ENCODE measurements at regions of chr20 and their contacts with region 1.

Region 1: DNA sequence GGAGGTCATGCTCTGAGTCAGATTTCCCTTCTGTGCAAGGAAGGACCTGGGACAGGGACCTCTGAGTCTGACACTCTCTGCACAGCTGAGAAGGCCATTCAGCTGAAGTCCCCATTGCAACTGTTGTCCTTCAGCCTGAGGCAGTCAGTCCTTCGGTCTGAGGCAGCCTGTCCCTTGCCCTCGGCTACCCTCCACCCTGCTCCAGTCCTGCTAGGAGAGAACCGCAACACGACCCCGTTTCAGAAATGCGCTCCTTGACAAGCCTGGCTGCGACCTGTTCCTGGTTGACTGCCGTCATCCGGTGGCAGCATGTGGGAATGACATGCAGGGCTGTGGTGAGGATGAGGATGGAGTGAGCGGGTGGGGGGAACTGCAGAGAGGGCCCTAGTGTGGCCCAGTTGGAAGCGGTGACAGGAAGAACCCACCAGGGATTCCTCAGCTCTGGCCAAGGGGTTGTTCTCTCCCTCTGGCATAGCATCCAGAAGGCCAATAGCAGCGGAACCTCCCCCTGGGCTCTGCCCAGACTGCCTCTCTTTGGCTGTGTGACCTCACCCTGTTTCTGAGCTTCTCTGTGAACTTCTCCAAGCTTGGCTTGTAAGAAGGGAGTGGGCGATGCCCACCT is 40.3 kb upstream of the ANGPT4 start:
- DNase-seq: peak; percentile 77 to 89
- ATAC-seq: peak; percentile 72 to 90
- H3K4me3 ChIP-seq: no peak overlapping the region
- H3K27ac ChIP-seq: no peak overlapping the region
- H3K4me1 ChIP-seq: no peaks in the 10 kb centered on the region
- CTCF ChIP-seq: peak; percentile 98
- EP300 ChIP-seq: no peak
- POLR2A ChIP-seq: no peak
- RAD21 ChIP-seq: peak; percentile 98 to 99

Region 2: DNA sequence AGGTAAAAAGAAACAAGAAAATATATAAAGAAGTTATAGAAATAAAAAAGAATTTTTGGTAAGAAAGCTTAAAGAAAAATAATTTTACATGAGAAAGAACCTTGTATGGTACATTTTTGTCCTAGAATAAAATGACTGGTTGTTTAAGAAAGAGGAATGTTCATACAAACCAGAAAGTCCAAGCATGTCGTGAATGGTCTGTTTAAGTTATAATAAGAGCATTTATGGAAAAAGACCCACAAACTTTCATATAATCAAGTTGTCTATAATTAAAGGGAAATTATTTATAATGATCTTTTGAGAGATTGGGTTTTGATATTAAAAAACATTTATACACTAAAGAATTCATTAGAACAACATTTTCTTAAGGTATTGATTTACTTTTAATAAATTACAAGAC is 150.7 kb before region 1 on chr20:
- CTCF ChIA-PET with region 1: interaction called, 52 read pairs
- POLR2A ChIA-PET with region 1: no interaction called
- DNase-seq: peak in 1 of 2 experiments; percentile 59
- ATAC-seq: no peak
- H3K4me3 ChIP-seq: no peak overlapping the region
- H3K27ac ChIP-seq: no peak overlapping the region
- H3K4me1 ChIP-seq: no peaks in the 10 kb centered on the region
- CTCF ChIP-seq: no peak
- EP300 ChIP-seq: no peak
- POLR2A ChIP-seq: no peak
- RAD21 ChIP-seq: no peak

Region 3: GRCh38 chr20:872855-873521 is 83.5 kb before region 1 on chr20:
- CTCF ChIA-PET with region 1: interaction called, 22 read pairs
- POLR2A ChIA-PET with region 1: no interaction called
- DNase-seq: no peak
- ATAC-seq: peak in 1 of 2 experiments; percentile 12; a peak in 2 of 6 replicates
- H3K4me3 ChIP-seq: no peak overlapping the region
- H3K27ac ChIP-seq: no peak overlapping the region
- H3K4me1 ChIP-seq: no peaks in the 10 kb centered on the region
- CTCF ChIP-seq: no peak; the same call in 2 of the 3 replicates
- EP300 ChIP-seq: no peak
- POLR2A ChIP-seq: no peak
- RAD21 ChIP-seq: no peak

Region 4: DNA sequence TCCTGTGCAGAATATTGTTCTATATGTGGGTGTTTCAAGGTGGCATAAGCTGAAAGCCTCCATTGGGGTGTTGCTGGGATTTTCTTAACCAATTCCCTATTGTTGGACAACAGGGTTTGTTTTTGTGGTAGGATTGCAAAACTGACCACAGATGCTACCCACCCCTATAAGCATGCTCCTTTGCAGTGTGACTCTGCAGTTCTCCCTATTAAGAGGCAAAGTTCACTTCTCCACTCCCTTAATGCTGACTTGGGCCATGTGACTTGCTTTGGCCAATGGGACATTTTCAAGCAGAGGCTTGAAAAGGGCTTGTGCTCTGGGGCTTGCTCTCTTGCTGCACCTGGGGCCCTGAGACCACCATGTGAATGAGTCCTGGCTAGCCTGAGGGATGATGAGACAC is 31.8 kb before region 1 on chr20:
- CTCF ChIA-PET with region 1: interaction called, 12 read pairs
- POLR2A ChIA-PET with region 1: no interaction called
- DNase-seq: peak in 1 of 2 experiments; percentile 25
- ATAC-seq: peak in 1 of 2 experiments; percentile 39; a peak in 1 of 6 replicates
- H3K4me3 ChIP-seq: no peak overlapping the region
- H3K27ac ChIP-seq: no peak overlapping the region
- H3K4me1 ChIP-seq: no peaks in the 10 kb centered on the region
- CTCF ChIP-seq: no peak
- EP300 ChIP-seq: no peak
- POLR2A ChIP-seq: no peak
- RAD21 ChIP-seq: no peak

Region 5: DNA sequence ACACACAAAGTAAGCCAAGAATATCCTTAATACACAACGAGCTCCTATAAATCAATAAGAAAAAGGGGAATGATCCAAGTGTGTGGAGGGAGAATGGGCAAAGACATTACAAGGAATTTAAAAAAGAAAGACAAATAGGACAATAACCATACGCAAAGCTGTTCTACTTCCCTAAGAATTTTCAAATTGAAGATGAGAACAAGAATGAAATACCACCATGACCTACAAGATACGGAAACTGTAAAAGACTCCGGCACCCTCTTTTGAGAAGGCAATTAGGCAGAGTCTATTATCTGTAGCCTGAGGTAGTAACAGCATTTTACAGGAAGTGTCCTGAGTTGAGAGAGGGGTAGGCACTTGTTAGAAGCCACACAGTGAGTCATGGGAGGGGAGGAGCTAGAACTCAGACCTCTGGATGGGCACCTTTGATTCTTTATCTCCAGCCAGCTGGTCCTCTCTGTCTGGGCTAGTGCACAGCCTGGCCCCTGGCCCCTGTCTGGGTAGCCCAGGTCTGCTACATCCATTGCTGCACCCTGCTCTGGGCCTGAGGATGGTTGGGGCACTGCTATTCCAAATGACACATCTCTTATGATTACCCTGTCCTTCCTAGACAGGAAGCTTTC is 30.4 kb after region 1 on chr20:
- CTCF ChIA-PET with region 1: interaction called, 22 read pairs
- POLR2A ChIA-PET with region 1: no interaction called
- DNase-seq: no peak
- ATAC-seq: no peak; a peak in 1 of 6 replicates
- H3K4me3 ChIP-seq: no peak overlapping the region
- H3K27ac ChIP-seq: no peak overlapping the region
- H3K4me1 ChIP-seq: no peaks in the 10 kb centered on the region
- CTCF ChIP-seq: no peak
- EP300 ChIP-seq: no peak
- POLR2A ChIP-seq: no peak
- RAD21 ChIP-seq: no peak

Region 6: GRCh38 chr20:1503564-1504227 is 547.3 kb after region 1 on chr20:
- CTCF ChIA-PET with region 1: interaction called, 11 read pairs
- POLR2A ChIA-PET with region 1: no interaction called
- DNase-seq: peak; percentile 95
- ATAC-seq: peak; percentile 98 to 100
- H3K4me3 ChIP-seq: no peak overlapping the region
- H3K27ac ChIP-seq: no peak overlapping the region
- H3K4me1 ChIP-seq: peaks cover 9% of the 10 kb centered on the region; the same call in 1 of the 3 replicates
- CTCF ChIP-seq: peak; percentile 100
- EP300 ChIP-seq: no peak
- POLR2A ChIP-seq: no peak
- RAD21 ChIP-seq: peak; percentile 98 to 99